ENCODE measurements at regions of chr20 and their contacts with region 1.

Region 1: GRCh38 chr20:31661625-31662371 is 24.1 kb downstream of the COX4I2 start:
- DNase-seq: peak; percentile 91
- H3K4me3 ChIP-seq: peak overlapping the region; percentile 10 to 46; a peak in 2 of 4 replicates
- H3K27ac ChIP-seq: peak overlapping the region; percentile 58 to 66; a peak in 3 of 4 replicates
- H3K4me1 ChIP-seq: peaks cover 6 to 32% of the 10 kb centered on the region in 2 experiments; a peak in 3 of 4 replicates
- H3K27me3 ChIP-seq: no peaks in the 10 kb centered on the region
- CTCF ChIP-seq: peak; percentile 63
- EP300 ChIP-seq: no peak
- RAD21 ChIP-seq: peak; percentile 60

Region 2: GRCh38 chr20:31474097-31474436 is 187.7 kb before region 1 on chr20:
- CTCF ChIA-PET with region 1: no interaction called
- POLR2A ChIA-PET with region 1: no interaction called
- DNase-seq: no peak
- H3K4me3 ChIP-seq: no peak overlapping the region
- H3K27ac ChIP-seq: no peak overlapping the region
- H3K4me1 ChIP-seq: peaks cover 2 to 7% of the 10 kb centered on the region in 2 experiments; a peak in 2 of 4 replicates
- H3K27me3 ChIP-seq: no peaks in the 10 kb centered on the region
- CTCF ChIP-seq: no peak
- EP300 ChIP-seq: no peak
- RAD21 ChIP-seq: no peak

Region 3: GRCh38 chr20:31560094-31560899 is 101.5 kb before region 1 on chr20:
- CTCF ChIA-PET with region 1: interaction called, 44 read pairs
- POLR2A ChIA-PET with region 1: interaction called, 3 read pairs
- DNase-seq: peak; percentile 68
- H3K4me3 ChIP-seq: peak overlapping the region in 1 of 2 experiments; percentile 54; a peak in 1 of 4 replicates
- H3K27ac ChIP-seq: peak overlapping the region; percentile 73 to 96
- H3K4me1 ChIP-seq: peaks cover 15 to 33% of the 10 kb centered on the region in 2 experiments
- H3K27me3 ChIP-seq: no peaks in the 10 kb centered on the region
- CTCF ChIP-seq: peak; percentile 98
- EP300 ChIP-seq: no peak
- RAD21 ChIP-seq: peak; percentile 55

Region 4: DNA sequence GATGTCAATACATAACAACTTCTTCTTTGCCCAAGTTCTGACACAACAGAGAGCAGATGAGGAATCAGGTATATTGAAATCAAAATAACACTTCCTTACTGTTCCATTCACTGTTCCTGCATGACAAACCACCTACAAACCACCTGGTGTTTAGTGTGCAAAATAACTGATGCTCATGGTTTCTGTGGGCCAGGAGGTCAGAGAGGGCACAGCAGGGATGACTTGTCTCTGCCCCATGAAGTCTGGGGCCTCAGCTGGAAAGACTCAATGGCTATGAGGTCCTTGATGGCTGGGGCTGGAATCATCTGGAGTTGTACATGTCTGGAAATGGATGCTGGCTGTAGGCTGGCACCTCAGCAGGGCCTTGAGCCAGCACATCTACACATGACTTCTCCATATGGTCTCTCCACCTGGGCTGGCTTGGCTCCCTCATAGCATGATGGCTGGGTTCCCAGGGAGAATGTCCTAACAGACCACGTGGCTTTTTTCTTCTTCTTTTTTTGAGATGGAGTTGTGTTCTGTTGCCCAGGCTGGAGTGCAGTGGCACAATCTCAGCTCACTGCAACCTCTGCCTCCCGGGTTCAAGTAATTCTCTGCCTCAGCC is 31.5 kb before region 1 on chr20:
- CTCF ChIA-PET with region 1: interaction called, 17 read pairs
- POLR2A ChIA-PET with region 1: no interaction called
- DNase-seq: no peak
- H3K4me3 ChIP-seq: no peak overlapping the region
- H3K27ac ChIP-seq: peak overlapping the region in 1 of 2 experiments; percentile 16; a peak in 1 of 4 replicates
- H3K4me1 ChIP-seq: peaks cover 0 to 6% of the 10 kb centered on the region in 2 experiments; a peak in 1 of 4 replicates
- H3K27me3 ChIP-seq: no peaks in the 10 kb centered on the region
- CTCF ChIP-seq: no peak
- EP300 ChIP-seq: no peak
- RAD21 ChIP-seq: no peak

Region 5: DNA sequence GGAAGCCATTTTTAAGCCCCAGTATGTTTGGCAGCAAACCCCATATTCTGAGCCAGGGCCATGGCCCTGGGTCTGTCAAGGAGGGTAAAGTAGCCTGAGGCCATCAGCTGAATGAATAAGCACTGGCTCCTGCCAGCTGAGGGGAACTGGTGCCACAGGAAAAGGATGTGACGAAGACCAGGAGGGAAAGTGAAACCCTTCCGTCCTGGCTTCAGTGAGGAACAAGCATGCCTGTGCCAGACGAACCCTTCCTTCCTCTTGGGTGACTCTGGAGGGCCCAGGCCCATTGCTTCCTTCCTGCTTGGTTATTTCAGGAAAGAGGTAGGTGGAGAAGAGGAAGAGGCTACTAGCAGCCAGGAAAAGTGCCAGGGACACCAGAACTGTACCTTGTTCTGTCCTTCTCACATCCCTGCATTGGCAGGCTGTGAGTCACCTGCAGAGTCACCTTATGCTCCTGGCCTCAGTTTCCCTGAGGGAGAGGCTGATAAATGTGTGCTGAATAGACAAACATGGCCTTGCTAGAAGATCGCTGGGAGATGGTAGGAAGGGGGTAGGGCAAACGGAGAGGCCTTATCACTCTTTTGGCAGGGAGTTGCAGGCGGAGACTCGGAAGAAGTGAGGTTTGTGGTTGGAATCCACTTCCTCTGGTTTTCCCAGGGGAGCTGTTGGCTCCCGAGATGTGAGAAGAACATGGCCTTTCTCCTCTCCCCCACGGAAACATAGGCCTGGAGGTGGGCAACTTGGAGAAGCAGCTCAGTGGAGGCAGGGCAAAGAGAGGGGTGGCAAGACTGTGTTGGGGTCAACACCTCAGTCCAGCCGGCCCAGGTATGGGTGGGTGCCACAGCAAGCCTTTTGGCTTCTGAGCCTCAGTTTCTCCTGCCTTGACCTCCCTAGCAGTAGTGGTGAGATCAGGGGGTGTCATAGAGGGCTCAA is 13.4 kb after region 1 on chr20:
- CTCF ChIA-PET with region 1: interaction called, 14 read pairs
- POLR2A ChIA-PET with region 1: no interaction called
- DNase-seq: peak; percentile 46
- H3K4me3 ChIP-seq: no peak overlapping the region
- H3K27ac ChIP-seq: peak overlapping the region; percentile 25 to 78; a peak in 3 of 4 replicates
- H3K4me1 ChIP-seq: peaks cover 52 to 56% of the 10 kb centered on the region in 2 experiments; a peak in 3 of 4 replicates
- H3K27me3 ChIP-seq: no peaks in the 10 kb centered on the region
- CTCF ChIP-seq: no peak
- EP300 ChIP-seq: no peak
- RAD21 ChIP-seq: no peak

Region 6: GRCh38 chr20:31712564-31713311 is 50.9 kb after region 1 on chr20:
- CTCF ChIA-PET with region 1: interaction called, 288 read pairs
- POLR2A ChIA-PET with region 1: no interaction called
- DNase-seq: no peak
- H3K4me3 ChIP-seq: peak overlapping the region; percentile 17 to 43; a peak in 3 of 4 replicates
- H3K27ac ChIP-seq: peak overlapping the region; percentile 95 to 99
- H3K4me1 ChIP-seq: peaks cover 33 to 51% of the 10 kb centered on the region in 2 experiments
- H3K27me3 ChIP-seq: no peaks in the 10 kb centered on the region
- CTCF ChIP-seq: no peak
- EP300 ChIP-seq: peak in 1 of 2 experiments; percentile 58; a peak in 1 of 4 replicates
- RAD21 ChIP-seq: no peak

Region 7: DNA sequence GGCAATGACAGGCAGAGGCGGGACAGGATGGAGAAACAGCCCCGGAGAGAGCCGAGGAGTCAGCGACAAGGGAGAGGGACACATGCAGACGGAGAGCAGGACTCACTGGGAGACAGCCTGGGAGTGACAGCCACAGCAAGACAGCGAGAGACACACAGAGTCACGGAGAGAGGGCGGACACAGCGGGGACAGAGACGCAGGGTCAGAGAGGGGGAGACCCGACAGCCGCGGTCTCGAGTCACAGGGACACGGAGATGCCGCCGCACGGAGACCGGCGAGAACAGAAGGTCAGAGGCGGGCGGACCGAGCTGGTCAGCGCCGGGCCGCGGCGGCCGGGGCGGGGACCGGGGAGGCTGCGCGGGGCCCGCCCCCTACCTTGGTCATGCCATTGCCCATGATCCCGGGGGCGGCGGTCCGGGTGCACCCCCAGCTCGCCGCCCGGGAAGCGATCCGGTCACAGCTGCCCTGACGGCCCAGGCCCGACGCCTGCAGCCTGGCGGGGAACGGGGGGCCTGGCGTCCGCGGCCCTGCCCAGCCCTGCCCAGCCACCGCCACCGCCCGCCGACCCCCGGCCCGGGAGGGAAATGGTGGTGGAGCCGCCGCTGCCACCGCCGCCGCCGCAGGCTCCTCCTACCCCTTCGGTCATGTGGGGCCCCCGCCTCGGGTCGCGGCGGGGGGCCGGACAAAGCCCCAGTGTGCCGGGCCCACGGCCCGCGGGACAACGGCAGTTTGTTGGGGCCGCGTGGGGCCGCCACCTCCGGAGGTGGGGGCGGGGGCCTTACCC is 208.3 kb after region 1 on chr20 and contains the starts of genes DUSP15 and TTLL9:
- CTCF ChIA-PET with region 1: no interaction called
- POLR2A ChIA-PET with region 1: no interaction called
- DNase-seq: peak; percentile 90
- H3K4me3 ChIP-seq: peak within 1 kb of the TSS; percentile 66 to 69
- H3K27ac ChIP-seq: peak within 1 kb of the TSS in 1 of 2 experiments; percentile 62; a peak in 1 of 4 replicates
- H3K4me1 ChIP-seq: peaks cover 0 to 23% of the 10 kb centered on the region in 2 experiments; a peak in 1 of 4 replicates
- H3K27me3 ChIP-seq: no peaks in the 10 kb centered on the region
- CTCF ChIP-seq: no peak
- EP300 ChIP-seq: no peak
- RAD21 ChIP-seq: no peak
- polyA plus RNA-seq, gene DUSP15: 4.3 and 5.4 TPM in 2 replicates
- polyA plus RNA-seq, gene TTLL9: 0.23 and 0.32 TPM in 2 replicates